B cell (primary cell): ENCODE measurements at regions of chr19 and their contacts with region 1.

Region 1: GRCh38 chr19:54345938-54346386 is 7.0 kb upstream of the LILRA4 start:
- DNase-seq: peak; percentile 80
- ATAC-seq: peak; percentile 97
- H3K4me3 ChIP-seq: peak overlapping the region in 3 of 5 experiments; percentile 21 to 52 (median 27)
- H3K4me3 Mint-ChIP-seq: peak overlapping the region; percentile 81
- H3K27ac ChIP-seq: peak overlapping the region; percentile 72
- H3K27ac Mint-ChIP-seq: peak overlapping the region; percentile 85
- H3K4me1 ChIP-seq: peaks cover 78 to 85% of the 10 kb centered on the region in 2 donors
- H3K4me1 Mint-ChIP-seq: peaks cover 73% of the 10 kb centered on the region
- H3K27me3 ChIP-seq: peaks cover 0 to 2% (median 0%) of the 10 kb centered on the region in 4 experiments
- H3K27me3 Mint-ChIP-seq: no peaks in the 10 kb centered on the region
- CTCF ChIP-seq: no peak

Region 2: DNA sequence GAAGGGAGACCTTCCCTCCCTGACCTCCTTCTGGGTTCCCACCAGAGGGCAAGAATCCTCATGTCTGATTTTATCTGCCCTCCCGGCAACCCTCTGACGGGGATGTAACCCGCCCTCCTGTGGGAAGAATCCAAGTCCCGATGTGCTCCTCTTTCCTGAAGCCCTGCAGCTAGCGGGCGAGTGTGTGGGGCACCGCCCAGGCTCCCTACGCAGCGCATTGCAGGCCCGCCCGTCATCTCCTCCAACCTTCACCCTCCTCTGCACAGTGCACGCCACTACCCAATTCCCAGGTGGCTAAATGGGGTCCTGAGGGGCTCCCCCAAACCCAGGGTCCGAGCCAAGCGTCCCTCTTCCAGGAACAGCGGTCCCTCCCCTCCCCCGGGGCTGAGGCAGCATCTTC is 11.4 kb after region 1 on chr19:
- CTCF ChIA-PET with region 1: interaction called, 6 read pairs
- POLR2A ChIA-PET with region 1: interaction called, 21 read pairs
- intact Hi-C with region 1: no loop called
- DNase-seq: no peak
- ATAC-seq: no peak
- H3K4me3 ChIP-seq: no peak overlapping the region
- H3K4me3 Mint-ChIP-seq: no peak overlapping the region
- H3K27ac ChIP-seq: no peak overlapping the region
- H3K27ac Mint-ChIP-seq: no peak overlapping the region
- H3K4me1 ChIP-seq: peaks cover 24 to 37% of the 10 kb centered on the region in 2 donors
- H3K4me1 Mint-ChIP-seq: peaks cover 41% of the 10 kb centered on the region
- H3K27me3 ChIP-seq: no peaks in the 10 kb centered on the region
- H3K27me3 Mint-ChIP-seq: no peaks in the 10 kb centered on the region
- CTCF ChIP-seq: no peak